Activated CD4-positive, alpha-beta memory T cell treated with anti-CD3 and anti-CD28 coated beads, Interleukin-2, amount 10 ng/mL, durations not matched to agents 7 days and 5 days (primary cell): ENCODE measurements at regions of chr1 and their contacts with region 1.

Region 1: GRCh38 chr1:61724813-61725694 is at the start of gene TM2D1:
- DNase-seq: peak; percentile 91
- H3K4me3 Mint-ChIP-seq: peak within 1 kb of the TSS; percentile 93
- H3K27ac Mint-ChIP-seq: peak within 1 kb of the TSS; percentile 95
- H3K4me1 Mint-ChIP-seq: peaks cover 26% of the 10 kb centered on the region
- H3K27me3 Mint-ChIP-seq: no peaks in the 10 kb centered on the region
- total RNA-seq, gene TM2D1: 39.1 to 39.9 TPM

Region 2: DNA sequence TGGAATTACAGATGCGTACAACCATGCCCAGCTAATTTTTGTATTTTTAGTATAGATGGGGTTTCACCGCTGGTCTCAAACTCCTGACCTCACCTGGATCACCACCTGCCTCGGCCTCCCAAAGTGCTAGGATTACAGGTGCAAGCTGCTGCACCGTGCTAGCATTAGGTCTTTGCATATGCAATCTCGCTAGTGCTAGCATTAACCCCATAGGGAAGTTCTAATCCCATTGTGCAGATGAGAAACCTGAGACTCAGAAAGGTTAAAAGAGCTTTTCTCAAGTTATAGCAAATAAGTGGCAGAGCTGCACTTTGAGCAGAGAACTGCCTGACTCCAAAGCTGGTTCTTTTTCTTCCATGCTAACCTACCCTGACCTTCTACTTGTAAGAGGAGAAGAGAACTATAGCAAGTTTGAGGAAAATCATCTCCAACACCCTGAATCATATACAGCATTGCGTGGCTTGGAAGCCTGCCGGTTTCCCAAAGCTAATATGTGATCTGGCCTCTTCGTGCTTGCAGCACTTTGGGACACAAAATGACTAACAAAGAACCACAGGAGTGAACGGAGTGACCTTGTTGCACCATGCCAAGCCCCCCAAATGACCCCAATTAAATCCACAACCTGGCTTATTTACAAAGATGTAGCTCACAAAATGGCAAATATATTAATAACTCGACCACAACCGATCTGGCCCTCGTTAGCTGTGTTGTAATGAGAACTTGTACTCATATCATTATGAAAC is 185.2 kb before region 1 on chr1:
- CTCF ChIA-PET with region 1: no interaction called
- POLR2A ChIA-PET with region 1: no interaction called
- DNase-seq: no peak
- H3K4me3 Mint-ChIP-seq: no peak overlapping the region
- H3K27ac Mint-ChIP-seq: no peak overlapping the region
- H3K4me1 Mint-ChIP-seq: peaks cover 15% of the 10 kb centered on the region
- H3K27me3 Mint-ChIP-seq: peaks cover 19% of the 10 kb centered on the region

Region 3: DNA sequence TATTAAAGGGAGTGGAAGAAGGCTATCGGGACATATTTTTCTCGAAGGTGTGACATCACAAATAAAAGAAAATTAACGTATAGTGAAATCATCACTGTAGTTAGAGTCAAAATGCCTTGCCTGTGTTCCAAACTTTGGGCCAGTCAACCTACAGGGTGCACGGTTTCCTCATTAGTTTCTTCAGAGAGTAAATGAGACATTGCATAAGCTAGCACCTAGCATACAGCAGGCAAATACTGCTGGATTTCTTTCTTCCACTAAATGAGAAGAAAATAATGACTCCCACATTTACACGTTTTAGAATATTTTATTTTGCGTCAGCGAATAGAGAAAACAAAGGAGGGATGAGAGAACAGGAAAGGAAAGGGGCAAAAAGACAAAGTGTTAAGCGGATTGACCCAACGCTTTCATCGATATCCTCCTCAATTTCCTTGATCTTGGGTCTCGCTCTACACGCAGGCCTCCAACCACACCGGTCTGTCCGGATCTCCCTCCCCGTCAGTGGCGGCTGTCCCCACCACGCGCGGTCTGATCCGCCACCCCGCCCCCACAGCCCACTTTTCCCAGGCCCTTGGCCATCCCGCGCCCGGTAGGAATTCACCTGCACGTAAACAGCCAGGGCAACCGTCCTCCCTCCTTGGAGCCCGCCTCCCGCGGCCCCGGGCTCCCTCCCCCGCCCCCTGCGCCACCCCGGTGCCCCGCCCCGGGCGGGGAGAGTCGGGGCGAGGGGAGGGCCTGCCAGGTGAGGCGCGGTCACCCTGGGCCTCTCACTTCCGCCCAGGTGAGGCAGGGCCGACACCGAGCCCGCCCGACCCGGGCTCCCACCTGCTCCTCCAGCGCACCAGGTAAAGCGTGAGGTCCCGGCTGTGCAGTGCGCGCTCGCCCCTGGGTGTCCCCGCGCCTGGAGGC is 16.9 kb after region 1 on chr1 and contains the start of gene PATJ:
- CTCF ChIA-PET with region 1: interaction called, 5 read pairs
- POLR2A ChIA-PET with region 1: interaction called, 11 read pairs
- DNase-seq: peak; percentile 63
- H3K4me3 Mint-ChIP-seq: peak within 1 kb of the TSS; percentile 86
- H3K27ac Mint-ChIP-seq: peak within 1 kb of the TSS; percentile 57
- H3K4me1 Mint-ChIP-seq: peaks cover 22% of the 10 kb centered on the region
- H3K27me3 Mint-ChIP-seq: no peaks in the 10 kb centered on the region
- total RNA-seq, gene PATJ: 10.8 to 11.3 TPM

Region 4: DNA sequence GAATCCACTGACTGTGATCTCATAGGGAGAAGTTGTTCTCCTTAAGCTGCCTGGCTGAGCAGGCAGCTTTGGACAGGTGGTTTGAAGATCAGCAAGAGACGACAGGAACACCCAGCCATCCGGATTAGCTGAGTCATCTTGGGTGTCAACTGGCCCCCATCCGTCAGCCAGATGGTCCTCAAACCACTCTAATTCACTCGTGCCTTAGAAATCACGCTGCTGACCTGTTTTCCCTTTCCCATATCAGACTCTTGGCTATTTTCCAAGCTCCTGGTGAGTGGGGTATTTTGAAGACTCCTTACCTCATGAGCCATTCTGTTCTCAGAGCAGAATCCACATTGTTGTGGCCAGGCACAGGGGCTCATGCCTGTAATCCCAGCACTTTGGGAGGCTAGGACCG is 320.5 kb after region 1 on chr1:
- CTCF ChIA-PET with region 1: no interaction called
- POLR2A ChIA-PET with region 1: no interaction called
- DNase-seq: no peak
- H3K4me3 Mint-ChIP-seq: no peak overlapping the region
- H3K27ac Mint-ChIP-seq: no peak overlapping the region
- H3K4me1 Mint-ChIP-seq: no peaks in the 10 kb centered on the region
- H3K27me3 Mint-ChIP-seq: no peaks in the 10 kb centered on the region